ENCODE measurements at regions of chr13 and their contacts with region 1.

Region 1: GRCh38 chr13:43804461-43805070 is 17.8 kb upstream of the ENOX1 start:
- H3K4me3 ChIP-seq: no peak overlapping the region
- H3K27ac ChIP-seq: no peak overlapping the region
- H3K4me1 ChIP-seq: no peaks in the 10 kb centered on the region
- CTCF ChIP-seq: no peak

Region 2: DNA sequence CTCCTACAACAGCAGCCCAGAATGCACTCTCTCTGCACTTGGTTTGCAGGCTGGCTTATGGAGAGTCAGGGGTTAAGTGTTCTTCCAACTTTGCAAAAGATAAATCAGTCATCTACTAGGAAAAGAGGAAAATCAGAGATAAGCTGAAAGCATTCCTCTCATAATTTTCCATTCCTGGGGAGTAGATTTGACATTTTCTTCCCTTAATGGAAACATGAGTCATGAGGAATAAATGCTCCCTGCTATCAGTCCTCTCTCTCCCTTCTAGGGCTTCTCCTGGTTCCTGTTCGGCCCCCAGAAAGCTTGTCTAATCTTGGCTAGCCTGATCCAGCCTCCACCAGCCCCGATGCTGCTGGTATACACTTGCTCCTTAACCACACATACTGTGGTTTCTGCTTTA is 10.6 kb after region 1 on chr13:
- CTCF ChIA-PET with region 1: interaction called, 13 read pairs
- POLR2A ChIA-PET with region 1: interaction called, 5 read pairs
- H3K4me3 ChIP-seq: no peak overlapping the region
- H3K27ac ChIP-seq: no peak overlapping the region
- H3K4me1 ChIP-seq: no peaks in the 10 kb centered on the region
- CTCF ChIP-seq: no peak